Panc1 (cell line): ENCODE measurements at regions of chr17 and their contacts with region 1.

Region 1: DNA sequence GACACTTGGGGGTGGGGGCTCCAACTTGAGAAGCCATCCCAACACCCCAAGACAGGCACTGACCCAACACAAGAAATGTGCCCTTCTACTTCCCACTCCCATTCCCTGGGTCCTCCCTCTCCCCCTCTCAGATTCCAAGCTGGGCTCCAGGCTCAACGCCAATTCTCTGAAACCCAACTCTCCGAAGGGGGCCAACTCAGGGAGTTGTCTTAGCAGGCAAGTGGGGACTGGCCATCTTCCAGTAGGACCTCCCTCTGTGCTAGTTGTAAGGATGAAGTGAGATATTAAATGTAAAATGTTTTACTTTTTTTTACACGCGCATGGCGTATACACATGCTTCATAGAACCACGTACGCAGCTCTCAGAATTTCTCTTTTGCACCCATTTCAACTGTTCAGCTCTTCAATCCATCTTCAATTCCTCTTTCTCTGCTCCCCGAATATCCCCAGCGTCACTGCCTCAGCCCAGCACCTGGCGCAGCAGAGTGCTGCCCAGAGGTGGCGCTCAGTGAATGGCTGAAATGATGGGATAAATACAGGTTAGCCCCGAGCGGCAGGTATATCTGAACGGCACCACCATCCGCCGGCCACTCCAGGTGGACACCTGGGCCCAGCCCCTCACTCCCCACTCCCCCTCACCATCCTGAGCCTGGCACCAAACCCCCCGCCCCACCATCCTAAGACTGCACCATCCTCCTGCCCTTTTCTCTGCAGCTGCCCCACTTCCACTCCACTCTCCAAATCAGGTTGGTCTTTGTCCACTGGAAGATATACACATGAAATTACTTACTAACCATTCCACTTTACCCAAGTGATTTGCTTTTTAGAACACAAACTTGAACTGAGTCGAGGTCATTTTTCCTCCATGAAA is 43.9 kb upstream of the TNRC6C start:
- DNase-seq: no peak
- ATAC-seq: peak; percentile 86
- H3K4me3 ChIP-seq: no peak overlapping the region
- H3K27ac ChIP-seq: no peak overlapping the region
- H3K4me1 ChIP-seq: peaks cover 19% of the 10 kb centered on the region
- H3K27me3 ChIP-seq: peaks cover 35% of the 10 kb centered on the region
- CTCF ChIP-seq: no peak

Region 2: DNA sequence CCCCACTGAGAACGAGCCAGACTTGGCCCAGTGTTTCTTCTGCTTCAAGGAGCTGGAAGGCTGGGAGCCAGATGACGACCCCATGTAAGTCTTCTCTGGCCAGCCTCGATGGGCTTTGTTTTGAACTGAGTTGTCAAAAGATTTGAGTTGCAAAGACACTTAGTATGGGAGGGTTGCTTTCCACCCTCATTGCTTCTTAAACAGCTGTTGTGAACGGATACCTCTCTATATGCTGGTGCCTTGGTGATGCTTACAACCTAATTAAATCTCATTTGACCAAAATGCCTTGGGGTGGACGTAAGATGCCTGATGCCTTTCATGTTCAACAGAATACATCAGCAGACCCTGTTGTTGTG is 300.1 kb after region 1 on chr17:
- CTCF ChIA-PET with region 1: no interaction called
- POLR2A ChIA-PET with region 1: interaction called, 10 read pairs
- in situ Hi-C with region 1: no loop called
- intact Hi-C with region 1: no loop called
- DNase-seq: no peak
- ATAC-seq: peak; percentile 1; the same call in 1 of the 2 replicates
- H3K4me3 ChIP-seq: peak overlapping the region; percentile 58 to 74
- H3K27ac ChIP-seq: peak overlapping the region; percentile 93
- H3K4me1 ChIP-seq: 0 out of 2 replicates have a peak, but pooled peaks cover 5% of the 10 kb centered on the region
- H3K27me3 ChIP-seq: no peaks in the 10 kb centered on the region
- CTCF ChIP-seq: no peak